Testis (tissue), 5 donors: ENCODE measurements at regions of chr9 and their contacts with region 1.

Region 1: DNA sequence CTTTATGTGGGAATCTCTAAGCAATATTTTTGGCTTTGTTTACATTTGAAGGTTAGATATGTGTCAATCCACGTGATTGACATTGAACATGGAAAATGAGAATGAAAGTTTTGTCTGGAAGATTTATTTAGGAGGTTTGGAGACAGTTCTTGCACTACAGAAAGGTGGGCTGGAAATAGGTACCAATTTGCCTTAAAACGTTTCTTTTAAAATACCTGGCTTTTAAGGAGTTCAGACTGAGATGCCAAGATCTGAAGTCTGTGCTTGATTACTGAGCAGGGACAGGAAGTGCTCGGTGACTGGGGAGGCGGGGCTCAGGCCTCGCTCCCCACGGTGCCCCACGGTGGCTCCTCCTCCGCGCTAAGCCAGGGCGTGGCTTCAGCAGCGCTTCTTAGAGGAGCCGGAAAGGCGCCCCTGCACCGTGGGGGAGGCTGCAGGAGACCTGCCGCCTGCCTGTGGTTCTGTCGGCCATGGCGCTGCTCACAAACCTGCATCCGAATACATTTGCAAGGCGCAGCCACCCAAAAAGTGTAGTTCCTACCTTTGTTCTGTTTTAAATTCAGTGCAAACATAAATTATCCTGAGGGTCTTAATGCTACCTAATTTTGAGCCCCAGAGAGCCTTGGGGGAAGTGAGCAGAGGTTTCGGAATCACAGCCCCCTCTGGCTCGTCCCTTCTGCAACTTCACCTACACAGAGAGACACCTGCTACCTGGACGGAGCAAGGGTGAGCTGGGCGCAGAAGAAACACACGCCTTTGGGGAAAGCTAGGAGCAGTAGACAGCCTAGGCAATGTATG is 49.2 kb downstream of the USP20 start:
- DNase-seq: peak; percentile 95
- H3K4me3 ChIP-seq: peak overlapping the region; percentile 12 to 51
- H3K27ac ChIP-seq: peak overlapping the region; percentile 77 to 81
- H3K4me1 ChIP-seq: peaks cover 33% of the 10 kb centered on the region
- H3K27me3 ChIP-seq: no peaks in the 10 kb centered on the region
- CTCF ChIP-seq: no peak
- POLR2A ChIP-seq: no peak

Region 2: DNA sequence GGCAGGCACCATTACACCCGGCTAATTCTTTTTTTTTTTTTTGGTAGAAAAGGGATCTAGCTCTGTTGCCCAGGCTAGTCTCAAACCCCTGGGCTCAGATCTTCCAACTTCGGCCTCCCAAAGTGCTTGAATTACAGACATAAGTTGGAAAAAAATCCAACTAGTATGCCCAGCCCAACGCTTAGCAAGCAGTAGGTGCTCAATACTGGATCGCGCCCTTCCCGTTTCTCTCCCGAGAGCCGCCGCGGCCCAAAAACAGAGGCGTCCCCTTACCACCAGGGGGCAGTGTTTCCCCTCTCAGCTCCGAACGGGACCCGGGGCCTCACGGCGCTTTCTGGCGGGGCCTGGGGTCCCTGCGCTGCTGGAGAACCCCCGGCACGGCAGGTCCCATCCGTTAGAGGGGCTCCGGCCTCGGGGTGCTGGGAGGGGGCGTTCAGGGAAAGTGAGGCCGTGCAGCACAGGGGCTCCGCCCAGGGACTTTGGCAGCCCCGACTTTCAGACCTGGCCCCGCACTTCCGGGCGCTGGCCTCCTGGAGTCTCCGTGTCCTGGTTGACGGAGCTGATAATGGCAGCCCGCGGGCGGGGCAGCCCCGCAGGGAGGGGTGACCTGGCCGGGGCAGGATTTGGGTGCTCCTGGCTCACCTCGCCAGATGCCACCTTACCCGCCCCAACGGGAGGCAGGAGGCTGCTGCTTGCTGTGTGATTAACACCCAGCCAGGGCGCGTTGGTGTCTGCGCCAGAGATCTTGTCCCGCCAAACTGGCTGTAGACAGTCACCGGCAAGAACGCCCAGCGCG is 146.7 kb before region 1 on chr9:
- intact Hi-C with region 1: no loop called
- DNase-seq: peak; percentile 92
- H3K4me3 ChIP-seq: peak overlapping the region; percentile 47 to 70
- H3K27ac ChIP-seq: peak overlapping the region in 1 of 2 donors; percentile 46
- H3K4me1 ChIP-seq: no peaks in the 10 kb centered on the region
- H3K27me3 ChIP-seq: no peaks in the 10 kb centered on the region
- CTCF ChIP-seq: peak; percentile 97 to 100 (median 99)
- POLR2A ChIP-seq: no peak

Region 3: DNA sequence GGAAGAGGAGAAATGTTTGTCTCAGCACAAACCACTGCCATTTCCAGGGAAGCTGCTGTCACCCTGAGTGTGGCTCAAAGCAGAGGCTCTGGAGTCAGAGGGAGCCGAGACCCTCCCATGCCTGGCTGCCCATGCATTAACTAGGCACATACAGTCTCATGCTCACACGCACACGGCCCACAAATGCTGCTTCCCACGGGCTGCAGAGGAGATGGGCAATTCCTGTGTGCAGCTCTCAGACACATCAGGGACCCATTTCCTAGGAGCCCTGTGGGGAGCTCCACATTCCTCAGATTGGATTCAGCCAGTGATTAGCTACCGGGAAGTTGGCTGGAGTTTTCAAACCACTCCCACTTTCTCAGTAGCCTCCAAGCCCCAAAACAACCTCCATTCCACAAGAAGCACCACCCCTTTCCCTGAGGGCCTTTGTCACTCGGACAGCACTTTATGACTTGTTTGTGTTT is 122.5 kb before region 1 on chr9:
- intact Hi-C with region 1: no loop called
- DNase-seq: no peak
- H3K4me3 ChIP-seq: no peak overlapping the region
- H3K27ac ChIP-seq: no peak overlapping the region
- H3K4me1 ChIP-seq: no peaks in the 10 kb centered on the region
- H3K27me3 ChIP-seq: no peaks in the 10 kb centered on the region
- CTCF ChIP-seq: no peak
- POLR2A ChIP-seq: no peak

Region 4: GRCh38 chr9:129996161-129996830 is 111.9 kb after region 1 on chr9:
- intact Hi-C with region 1: no loop called
- DNase-seq: no peak
- H3K4me3 ChIP-seq: no peak overlapping the region
- H3K27ac ChIP-seq: peak overlapping the region; percentile 50 to 73
- H3K4me1 ChIP-seq: peaks cover 30% of the 10 kb centered on the region
- H3K27me3 ChIP-seq: no peaks in the 10 kb centered on the region
- CTCF ChIP-seq: no peak
- POLR2A ChIP-seq: no peak

Region 5: DNA sequence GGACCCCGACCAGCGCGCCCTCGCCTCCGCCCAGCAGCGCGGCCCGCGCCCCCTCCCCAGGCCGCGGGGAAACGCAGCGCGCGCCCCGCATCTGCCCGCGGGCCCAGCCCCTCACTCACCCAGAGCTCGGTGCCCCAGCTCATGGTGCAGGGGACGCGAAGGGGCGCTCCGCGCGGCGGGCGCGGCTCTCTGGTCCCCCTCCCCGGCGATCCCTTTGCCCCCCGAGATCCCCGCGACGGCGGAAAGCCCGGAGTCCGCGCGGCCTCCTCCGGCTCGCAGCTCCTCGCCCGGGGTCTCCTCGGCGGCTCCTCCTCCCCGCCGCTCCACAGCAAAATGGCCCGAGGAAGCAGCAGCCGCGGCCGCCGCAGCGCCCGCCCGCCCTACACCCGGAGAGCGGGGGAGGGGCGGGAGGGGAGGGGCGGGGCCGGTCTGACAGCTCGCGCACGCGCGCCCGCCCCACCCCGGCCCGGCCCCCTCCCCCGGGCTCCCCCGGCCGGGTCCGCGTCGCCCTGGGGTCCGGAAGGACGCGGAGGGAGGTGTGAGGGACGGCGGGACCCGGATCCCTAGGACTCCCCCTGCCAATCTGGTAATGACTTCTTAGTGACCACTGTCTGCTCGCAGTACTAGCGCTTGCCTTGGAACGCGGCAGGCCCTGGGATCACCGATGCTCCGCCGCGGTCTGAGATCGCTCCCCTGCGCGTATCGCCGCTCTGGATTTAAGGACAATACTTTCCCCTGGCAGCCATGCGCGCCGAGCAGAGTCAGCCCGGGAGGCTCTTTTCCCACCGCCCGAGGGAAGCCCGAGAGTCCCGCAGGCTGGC is 158.6 kb after region 1 on chr9 and contains the start of gene FNBP1:
- intact Hi-C with region 1: loop called (anchors 5 kb)
- DNase-seq: peak; percentile 86
- H3K4me3 ChIP-seq: peak within 1 kb of the TSS; percentile 86 to 98
- H3K27ac ChIP-seq: peak within 1 kb of the TSS; percentile 95 to 97
- H3K4me1 ChIP-seq: peaks cover 17% of the 10 kb centered on the region
- H3K27me3 ChIP-seq: no peaks in the 10 kb centered on the region
- CTCF ChIP-seq: no peak
- POLR2A ChIP-seq: peak; percentile 47
- total RNA-seq, gene FNBP1: 76.6 to 89.2 TPM

Region 6: GRCh38 chr9:130107234-130107861 is 222.9 kb after region 1 on chr9:
- intact Hi-C with region 1: loop called (anchors 10 kb)
- DNase-seq: peak; percentile 95
- H3K4me3 ChIP-seq: no peak overlapping the region
- H3K27ac ChIP-seq: no peak overlapping the region
- H3K4me1 ChIP-seq: peaks cover 13% of the 10 kb centered on the region
- H3K27me3 ChIP-seq: no peaks in the 10 kb centered on the region
- CTCF ChIP-seq: peak; percentile 75 to 88 (median 79)
- POLR2A ChIP-seq: no peak

Region 7: DNA sequence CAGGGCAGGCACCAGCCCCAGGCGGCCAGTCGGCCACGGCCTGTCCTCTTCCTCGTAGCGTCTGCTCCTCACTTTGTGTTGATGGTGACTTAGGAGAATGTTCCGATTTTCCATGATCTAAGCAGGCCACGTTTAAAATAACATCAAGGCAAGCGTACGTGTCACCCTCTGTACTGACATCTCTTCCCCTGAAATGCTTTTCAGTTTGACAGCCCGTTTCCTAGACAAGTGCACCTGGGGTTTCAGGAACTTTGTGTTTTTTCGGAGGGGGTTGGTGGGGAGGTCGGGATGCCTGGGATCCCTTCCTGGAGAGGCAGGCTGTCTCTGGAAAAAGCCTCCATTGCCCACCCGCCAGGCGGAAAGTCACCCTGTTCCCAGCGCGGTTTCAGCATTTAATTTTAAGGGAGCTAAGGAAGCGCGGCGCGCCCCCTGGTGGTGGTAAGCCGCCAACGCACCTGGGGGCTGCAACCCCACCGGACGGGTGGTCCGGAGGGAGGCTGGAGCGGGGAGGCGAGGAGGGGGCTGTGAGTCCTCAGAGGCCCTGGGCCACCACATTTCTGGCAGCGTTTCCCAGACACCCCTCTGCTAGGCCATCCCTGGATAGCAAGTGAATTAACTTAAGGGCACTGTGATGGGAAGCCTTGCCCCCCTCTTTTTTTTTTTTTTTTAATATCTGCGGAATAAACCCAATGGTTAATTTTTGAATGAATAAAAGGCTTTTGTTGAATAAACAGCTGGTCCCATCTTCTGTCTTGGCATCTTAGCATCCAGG is 351.7 kb after region 1 on chr9:
- intact Hi-C with region 1: loop called (anchors 10 kb)
- DNase-seq: peak; percentile 78
- H3K4me3 ChIP-seq: no peak overlapping the region
- H3K27ac ChIP-seq: no peak overlapping the region
- H3K4me1 ChIP-seq: no peaks in the 10 kb centered on the region
- H3K27me3 ChIP-seq: no peaks in the 10 kb centered on the region
- CTCF ChIP-seq: peak; percentile 97 to 100 (median 98)
- POLR2A ChIP-seq: no peak